IMR-90 (cell line): ENCODE measurements at regions of chr2 and their contacts with region 1.

Region 1: GRCh38 chr2:216090369-216090786 is 8.7 kb downstream of the TMEM169 start:
- DNase-seq: peak; percentile 53
- ATAC-seq: no peak
- H3K4me3 ChIP-seq: no peak overlapping the region
- H3K27ac ChIP-seq: no peak overlapping the region
- H3K4me1 ChIP-seq: no peaks in the 10 kb centered on the region
- H3K27me3 ChIP-seq: no peaks in the 10 kb centered on the region; the same call in 1 of the 2 replicates
- CTCF ChIP-seq: no peak
- POLR2A ChIP-seq: no peak
- RAD21 ChIP-seq: no peak

Region 2: DNA sequence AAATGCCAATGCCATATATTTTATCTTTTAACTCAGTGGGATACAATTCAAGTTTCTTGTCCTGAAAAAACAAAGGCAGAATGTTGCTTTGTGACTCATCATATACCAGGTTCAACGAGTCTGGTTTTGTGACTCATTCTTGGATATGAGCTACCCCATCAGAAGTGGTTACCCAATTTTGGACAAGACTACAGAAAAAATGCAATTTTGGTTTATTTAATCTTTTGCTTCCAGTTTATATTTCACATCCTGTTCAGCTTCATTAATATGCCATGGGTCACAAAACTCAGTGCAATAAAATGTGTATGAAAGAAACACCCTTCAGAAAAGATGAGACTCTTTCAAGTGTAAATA is 679.5 kb before region 1 on chr2:
- CTCF ChIA-PET with region 1: no interaction called
- POLR2A ChIA-PET with region 1: interaction called, 11 read pairs
- dilution Hi-C with region 1: no loop called
- in situ Hi-C with region 1: no loop called
- intact Hi-C with region 1: no loop called
- DNase-seq: peak; percentile 98
- ATAC-seq: peak; percentile 66
- H3K4me3 ChIP-seq: no peak overlapping the region
- H3K27ac ChIP-seq: no peak overlapping the region
- H3K4me1 ChIP-seq: peaks cover 17% of the 10 kb centered on the region
- H3K27me3 ChIP-seq: no peaks in the 10 kb centered on the region
- CTCF ChIP-seq: no peak
- POLR2A ChIP-seq: 0 out of 2 replicates have a peak, but pooled peaks have one; percentile 22
- RAD21 ChIP-seq: no peak

Region 3: DNA sequence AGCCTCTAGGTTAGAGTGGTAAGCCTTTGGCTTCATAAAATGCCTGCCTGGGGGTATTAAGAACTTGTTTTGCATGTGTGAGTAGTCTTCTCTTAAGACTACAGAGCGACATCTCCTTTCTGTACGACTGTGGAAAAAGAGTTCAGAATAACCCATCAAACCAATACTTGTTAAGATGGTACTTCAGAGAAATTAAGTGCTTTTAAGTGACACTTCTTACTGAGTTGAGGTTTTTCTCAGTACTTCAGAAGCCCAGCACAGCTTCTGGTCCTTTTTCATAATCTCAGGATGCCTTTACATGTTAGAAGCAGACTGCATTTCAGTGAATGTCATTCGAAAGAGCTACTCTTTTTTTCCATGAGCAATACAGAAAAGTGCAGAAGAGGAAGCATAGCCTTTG is 29.6 kb after region 1 on chr2:
- CTCF ChIA-PET with region 1: no interaction called
- POLR2A ChIA-PET with region 1: no interaction called
- dilution Hi-C with region 1: no loop called
- in situ Hi-C with region 1: no loop called
- intact Hi-C with region 1: no loop called
- DNase-seq: no peak
- ATAC-seq: no peak
- H3K4me3 ChIP-seq: no peak overlapping the region
- H3K27ac ChIP-seq: no peak overlapping the region
- H3K4me1 ChIP-seq: peaks cover 12% of the 10 kb centered on the region
- H3K27me3 ChIP-seq: no peaks in the 10 kb centered on the region
- CTCF ChIP-seq: no peak
- POLR2A ChIP-seq: no peak
- RAD21 ChIP-seq: no peak

Region 4: GRCh38 chr2:216130346-216130971 is 40.1 kb after region 1 on chr2:
- CTCF ChIA-PET with region 1: no interaction called
- POLR2A ChIA-PET with region 1: interaction called, 11 read pairs
- dilution Hi-C with region 1: no loop called
- in situ Hi-C with region 1: no loop called
- intact Hi-C with region 1: no loop called
- DNase-seq: no peak
- ATAC-seq: peak; percentile 48
- H3K4me3 ChIP-seq: no peak overlapping the region
- H3K27ac ChIP-seq: peak overlapping the region; percentile 10; the same call in 1 of the 2 replicates
- H3K4me1 ChIP-seq: peaks cover 7% of the 10 kb centered on the region; the same call in 1 of the 2 replicates
- H3K27me3 ChIP-seq: no peaks in the 10 kb centered on the region
- CTCF ChIP-seq: no peak
- POLR2A ChIP-seq: no peak
- RAD21 ChIP-seq: no peak